Left lung (tissue), 14 donors: ENCODE measurements at regions of chr4 and their contacts with region 1.

Region 1: GRCh38 chr4:105520817-105521790 is 31.3 kb upstream of the ARHGEF38 start:
- DNase-seq: peak in 2 of 4 donors; percentile 44 to 70
- ATAC-seq: peak; percentile 96
- H3K4me3 ChIP-seq: no peak overlapping the region
- H3K27ac ChIP-seq: no peak overlapping the region
- H3K4me1 ChIP-seq: no peaks in the 10 kb centered on the region
- H3K27me3 ChIP-seq: no peaks in the 10 kb centered on the region
- CTCF ChIP-seq: peak; percentile 38 to 60

Region 2: GRCh38 chr4:105440890-105441289 is 80.2 kb before region 1 on chr4:
- intact Hi-C with region 1: no loop called
- DNase-seq: no peak
- ATAC-seq: no peak
- H3K4me3 ChIP-seq: no peak overlapping the region
- H3K27ac ChIP-seq: no peak overlapping the region
- H3K4me1 ChIP-seq: no peaks in the 10 kb centered on the region
- H3K27me3 ChIP-seq: no peaks in the 10 kb centered on the region
- CTCF ChIP-seq: no peak

Region 3: DNA sequence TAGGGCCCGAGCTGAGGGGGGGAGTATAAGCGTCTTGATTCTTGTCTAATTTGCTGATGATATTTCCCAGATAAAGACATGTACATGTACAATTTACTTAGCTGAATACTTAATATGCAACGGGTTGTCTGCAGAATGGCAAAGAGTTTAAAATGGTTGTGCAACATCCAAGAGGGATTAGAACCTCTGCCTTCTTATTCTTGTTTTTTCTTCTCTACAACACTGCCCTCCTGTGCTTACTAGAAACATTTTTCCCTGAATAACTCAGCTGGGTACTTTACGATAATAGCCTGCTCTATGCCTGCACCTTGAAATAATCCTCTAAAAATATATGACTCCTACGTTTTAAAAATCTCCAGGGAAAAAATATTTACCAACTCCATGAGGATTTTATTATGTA is 145.6 kb after region 1 on chr4:
- intact Hi-C with region 1: loop called in 1 of 2 experiments (anchors 10 kb)
- DNase-seq: no peak
- ATAC-seq: peak; percentile 81
- H3K4me3 ChIP-seq: no peak overlapping the region
- H3K27ac ChIP-seq: no peak overlapping the region
- H3K4me1 ChIP-seq: no peaks in the 10 kb centered on the region
- H3K27me3 ChIP-seq: no peaks in the 10 kb centered on the region
- CTCF ChIP-seq: peak in 1 of 2 donors; percentile 24